Pancreas (tissue), 10 donors: ENCODE measurements at regions of chr1 and their contacts with region 1.

Region 1: GRCh38 chr1:204453141-204453772 is 41.3 kb downstream of the PIK3C2B start:
- DNase-seq: no peak
- ATAC-seq: peak in 1 of 4 donors; percentile 17
- H3K4me3 ChIP-seq: no peak overlapping the region
- H3K27ac ChIP-seq: no peak overlapping the region
- H3K4me1 ChIP-seq: no peaks in the 10 kb centered on the region
- H3K27me3 ChIP-seq: no peaks in the 10 kb centered on the region
- CTCF ChIP-seq: no peak

Region 2: DNA sequence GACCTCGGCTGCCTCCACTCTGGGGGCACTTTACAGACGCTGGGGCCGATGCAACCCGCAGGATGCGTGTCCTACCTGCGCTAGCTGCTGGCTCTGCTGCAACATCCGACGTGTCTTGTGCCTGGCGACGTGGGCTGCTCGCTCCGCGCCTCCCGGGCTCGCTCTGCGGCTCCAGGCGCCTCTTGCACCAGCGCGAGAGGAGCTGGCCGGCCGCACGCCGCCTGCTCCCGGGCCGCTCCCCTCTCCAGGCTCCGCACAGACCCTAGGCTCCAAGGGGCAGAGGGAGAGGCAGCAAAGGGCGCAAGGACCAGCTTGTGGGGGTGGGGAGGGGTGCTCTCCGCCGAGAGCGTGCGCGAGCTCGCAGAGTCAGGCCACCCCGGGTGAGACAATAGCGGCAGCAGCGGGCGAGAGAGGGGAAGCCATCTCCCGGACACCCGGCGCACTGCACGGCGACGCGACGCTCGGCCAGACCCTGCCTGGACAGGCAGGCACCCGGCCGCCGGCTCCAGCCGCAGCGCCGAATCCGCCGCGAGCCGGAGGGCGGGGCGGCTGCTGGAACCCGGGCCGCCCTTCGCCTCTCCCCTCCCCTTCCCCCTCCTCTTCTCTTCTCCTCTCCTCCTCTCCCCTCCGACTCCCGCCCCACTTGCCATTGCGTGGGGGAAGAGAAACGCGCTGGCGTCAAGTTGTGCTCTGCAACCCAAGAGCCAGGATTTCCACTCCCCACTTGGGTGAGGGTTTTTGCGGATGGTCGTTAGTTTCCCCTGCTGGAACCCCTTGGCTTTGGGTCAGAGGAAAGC is 41.2 kb after region 1 on chr1 and contains the start of gene PIK3C2B:
- intact Hi-C with region 1: loop called in 2 of 3 experiments (anchors 5 to 10 kb)
- DNase-seq: peak; percentile 75 to 93 (median 84)
- ATAC-seq: peak; percentile 78 to 90 (median 89)
- H3K4me3 ChIP-seq: peak within 1 kb of the TSS; percentile 62 to 72 (median 64)
- H3K27ac ChIP-seq: peak within 1 kb of the TSS; percentile 85 to 91 (median 88)
- H3K4me1 ChIP-seq: peaks cover 8 to 12% (median 10%) of the 10 kb centered on the region in 3 donors
- H3K27me3 ChIP-seq: no peaks in the 10 kb centered on the region
- CTCF ChIP-seq: peak; percentile 15 to 46 (median 25)
- total RNA-seq, gene PIK3C2B: 8.7 to 17.5 (median 9.7) TPM